B cell (primary cell): ENCODE measurements at regions of chr10 and their contacts with region 1.

Region 1: DNA sequence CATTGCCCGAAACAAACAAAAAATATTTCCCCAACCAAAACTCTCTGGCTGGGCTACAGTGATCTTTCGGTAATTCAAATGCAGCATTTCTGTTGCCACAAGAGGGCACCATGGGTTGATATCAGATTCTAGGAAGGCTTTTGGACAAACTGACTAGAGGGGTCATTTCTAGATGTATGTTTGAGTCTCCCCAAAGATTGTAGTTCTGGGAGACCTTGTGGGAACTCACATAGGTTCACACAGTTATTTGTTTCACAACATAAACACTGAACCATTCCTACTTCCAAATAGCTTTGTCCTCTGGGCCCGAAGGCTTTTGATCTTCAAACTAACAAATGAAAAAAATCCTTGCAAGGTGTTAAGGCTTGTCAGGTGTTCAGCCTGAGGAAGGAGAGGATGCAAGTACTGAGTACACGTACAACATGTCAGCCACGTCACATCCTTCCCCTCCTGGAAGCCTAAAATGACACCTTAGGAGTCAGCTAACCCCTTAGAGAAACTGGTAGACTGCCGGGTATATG is 37.0 kb upstream of the IL15RA start:
- DNase-seq: peak; percentile 79
- ATAC-seq: peak; percentile 79
- H3K4me3 ChIP-seq: no peak overlapping the region
- H3K4me3 Mint-ChIP-seq: no peak overlapping the region
- H3K27ac ChIP-seq: peak overlapping the region; percentile 34 to 57
- H3K27ac Mint-ChIP-seq: peak overlapping the region; percentile 67
- H3K4me1 ChIP-seq: peaks cover 4 to 9% of the 10 kb centered on the region in 2 donors
- H3K4me1 Mint-ChIP-seq: peaks cover 10% of the 10 kb centered on the region
- H3K27me3 ChIP-seq: no peaks in the 10 kb centered on the region
- H3K27me3 Mint-ChIP-seq: no peaks in the 10 kb centered on the region
- CTCF ChIP-seq: peak; percentile 86

Region 2: DNA sequence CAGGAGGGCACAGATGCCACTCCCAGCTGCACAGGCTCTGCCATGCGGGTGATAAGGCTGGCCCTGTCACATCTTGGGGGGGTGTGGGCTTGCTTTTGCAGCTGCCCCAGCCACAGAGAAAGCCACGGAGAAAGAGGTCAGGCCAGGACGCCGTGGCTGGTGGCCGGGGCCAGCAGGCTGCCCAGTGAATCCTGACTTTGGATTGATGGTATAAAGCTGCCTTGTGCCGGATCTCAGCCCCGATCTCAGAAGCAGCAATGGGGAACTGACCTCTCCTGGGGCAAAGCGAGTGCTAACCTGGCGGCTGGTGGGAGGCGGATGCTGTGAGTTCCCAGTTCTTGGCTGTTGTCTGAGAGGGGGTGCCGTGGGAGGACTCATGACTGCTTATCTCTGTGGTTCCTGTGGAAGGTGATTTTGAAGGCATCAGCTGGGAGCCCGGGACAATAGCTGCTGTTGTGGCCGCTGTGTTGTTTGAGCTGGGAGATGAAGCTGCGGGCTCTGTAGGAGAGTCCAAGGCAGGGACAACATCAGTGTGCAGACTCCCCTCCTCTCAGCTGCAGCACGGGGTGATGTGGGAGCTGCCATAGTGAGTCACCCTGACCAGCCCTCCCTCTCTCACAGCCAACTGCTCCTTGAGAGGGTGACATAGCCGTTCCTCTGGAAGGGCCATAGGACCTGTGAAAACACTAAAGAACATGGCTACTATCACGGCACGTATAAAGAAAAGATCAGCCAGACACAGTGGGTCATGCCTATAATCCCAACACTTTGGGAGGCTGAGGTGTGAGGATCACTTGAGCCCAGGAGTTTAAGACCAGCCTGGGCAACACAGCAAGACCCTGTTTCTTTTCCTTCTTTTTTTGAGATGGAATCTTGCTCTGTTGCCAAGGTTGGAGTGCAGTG is 54.0 kb before region 1 on chr10:
- CTCF ChIA-PET with region 1: no interaction called
- POLR2A ChIA-PET with region 1: no interaction called
- intact Hi-C with region 1: no loop called
- DNase-seq: no peak
- ATAC-seq: no peak
- H3K4me3 ChIP-seq: no peak overlapping the region
- H3K4me3 Mint-ChIP-seq: no peak overlapping the region
- H3K27ac ChIP-seq: no peak overlapping the region
- H3K27ac Mint-ChIP-seq: no peak overlapping the region
- H3K4me1 ChIP-seq: no peaks in the 10 kb centered on the region
- H3K4me1 Mint-ChIP-seq: no peaks in the 10 kb centered on the region
- H3K27me3 ChIP-seq: no peaks in the 10 kb centered on the region
- H3K27me3 Mint-ChIP-seq: no peaks in the 10 kb centered on the region
- CTCF ChIP-seq: no peak

Region 3: GRCh38 chr10:5977471-5978229 is 36.7 kb before region 1 on chr10 and contains the start of gene IL15RA:
- CTCF ChIA-PET with region 1: interaction called, 4 read pairs
- POLR2A ChIA-PET with region 1: no interaction called
- intact Hi-C with region 1: loop called (anchors 2 kb)
- DNase-seq: peak; percentile 88
- ATAC-seq: peak; percentile 77
- H3K4me3 ChIP-seq: peak within 1 kb of the TSS; percentile 74 to 96 (median 93)
- H3K4me3 Mint-ChIP-seq: peak within 1 kb of the TSS; percentile 90
- H3K27ac ChIP-seq: peak within 1 kb of the TSS; percentile 65 to 75
- H3K27ac Mint-ChIP-seq: peak within 1 kb of the TSS; percentile 95
- H3K4me1 ChIP-seq: peaks cover 8 to 27% of the 10 kb centered on the region in 2 donors
- H3K4me1 Mint-ChIP-seq: peaks cover 29% of the 10 kb centered on the region
- H3K27me3 ChIP-seq: peaks cover 0 to 3% (median 0%) of the 10 kb centered on the region in 4 experiments
- H3K27me3 Mint-ChIP-seq: no peaks in the 10 kb centered on the region
- CTCF ChIP-seq: peak; percentile 43
- total RNA-seq, gene IL15RA: 6.8 and 9.3 TPM in 2 replicates

Region 4: GRCh38 chr10:6027929-6028328 is 13.6 kb after region 1 on chr10:
- CTCF ChIA-PET with region 1: interaction called, 11 read pairs
- POLR2A ChIA-PET with region 1: interaction called, 5 read pairs
- intact Hi-C with region 1: no loop called
- DNase-seq: no peak
- ATAC-seq: no peak
- H3K4me3 ChIP-seq: no peak overlapping the region
- H3K4me3 Mint-ChIP-seq: no peak overlapping the region
- H3K27ac ChIP-seq: no peak overlapping the region
- H3K27ac Mint-ChIP-seq: no peak overlapping the region
- H3K4me1 ChIP-seq: peaks cover 0 to 5% of the 10 kb centered on the region in 2 donors
- H3K4me1 Mint-ChIP-seq: peaks cover 5% of the 10 kb centered on the region
- H3K27me3 ChIP-seq: no peaks in the 10 kb centered on the region
- H3K27me3 Mint-ChIP-seq: no peaks in the 10 kb centered on the region
- CTCF ChIP-seq: no peak

Region 5: DNA sequence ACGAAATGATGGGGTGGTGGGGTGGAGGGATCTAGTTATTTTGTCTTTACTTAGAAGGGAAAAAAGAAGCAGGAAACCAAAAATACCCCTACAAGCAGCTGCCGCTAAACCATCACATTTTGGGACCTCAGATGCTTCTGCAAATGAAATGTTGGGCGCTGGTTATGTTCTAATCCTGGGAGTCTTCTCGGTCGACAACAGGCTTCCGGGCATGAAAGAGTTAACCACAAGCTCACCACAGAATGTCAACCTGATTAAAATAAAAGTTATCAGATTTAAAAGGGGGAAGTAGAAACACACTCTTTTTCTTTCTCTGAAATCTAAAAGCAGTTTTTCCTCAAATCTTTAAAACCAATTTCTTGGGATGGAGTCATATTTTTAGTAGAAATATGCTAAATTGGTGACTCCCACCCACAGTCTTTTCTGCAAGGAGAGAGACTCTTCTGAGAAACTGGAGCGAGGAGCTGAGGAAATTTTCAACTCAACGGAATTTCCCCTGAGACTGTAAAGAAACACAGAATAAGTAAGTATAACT is 31.1 kb after region 1 on chr10:
- CTCF ChIA-PET with region 1: interaction called, 104 read pairs
- POLR2A ChIA-PET with region 1: interaction called, 5 read pairs
- intact Hi-C with region 1: loop called (anchors 1 kb)
- DNase-seq: no peak
- ATAC-seq: no peak
- H3K4me3 ChIP-seq: peak overlapping the region in 3 of 5 experiments; percentile 2 to 30 (median 5)
- H3K4me3 Mint-ChIP-seq: peak overlapping the region; percentile 82
- H3K27ac ChIP-seq: peak overlapping the region; percentile 21 to 69
- H3K27ac Mint-ChIP-seq: peak overlapping the region; percentile 94
- H3K4me1 ChIP-seq: peaks cover 57 to 58% of the 10 kb centered on the region in 2 donors
- H3K4me1 Mint-ChIP-seq: peaks cover 75% of the 10 kb centered on the region
- H3K27me3 ChIP-seq: no peaks in the 10 kb centered on the region
- H3K27me3 Mint-ChIP-seq: no peaks in the 10 kb centered on the region
- CTCF ChIP-seq: no peak

Region 6: DNA sequence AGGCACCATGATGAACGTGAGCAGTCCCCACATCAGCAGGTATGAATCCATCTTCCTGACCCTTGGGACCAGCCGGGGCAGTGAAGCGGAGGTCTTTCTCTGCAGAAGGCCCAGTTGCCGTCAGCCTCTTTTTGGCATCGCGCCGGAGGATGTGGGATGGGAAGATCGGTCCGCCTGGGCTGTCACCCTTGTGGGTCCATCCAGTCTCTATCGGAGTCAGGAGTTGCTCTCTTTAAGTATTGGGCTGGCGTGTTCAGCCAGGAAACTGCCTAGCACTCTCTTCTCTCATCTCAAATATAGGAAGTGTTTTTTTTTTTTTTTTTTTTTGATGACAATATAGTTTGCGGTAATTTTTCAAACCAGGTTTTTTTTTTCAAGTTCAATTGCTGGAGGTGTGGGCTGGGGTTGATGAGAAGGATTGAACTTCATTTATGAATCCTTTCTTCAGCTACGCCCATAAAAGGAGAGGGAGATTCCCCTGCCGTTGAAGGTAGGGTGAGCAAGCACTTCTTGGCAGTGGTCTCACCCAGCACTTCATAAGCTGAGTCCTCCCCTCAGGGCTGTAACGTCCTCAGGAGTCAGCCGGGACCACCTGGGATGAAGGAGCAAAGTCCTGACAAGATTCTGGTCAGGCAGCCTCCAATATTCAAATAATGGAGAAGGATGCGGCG is 47.9 kb after region 1 on chr10 and contains the start of gene IL2RA:
- CTCF ChIA-PET with region 1: interaction called, 34 read pairs
- POLR2A ChIA-PET with region 1: interaction called, 3 read pairs
- intact Hi-C with region 1: loop called (anchors 5 kb)
- DNase-seq: peak; percentile 73
- ATAC-seq: peak; percentile 73
- H3K4me3 ChIP-seq: peak within 1 kb of the TSS in 4 of 5 experiments; percentile 51 to 62 (median 54)
- H3K4me3 Mint-ChIP-seq: peak within 1 kb of the TSS; percentile 97
- H3K27ac ChIP-seq: peak within 1 kb of the TSS; percentile 62 to 77
- H3K27ac Mint-ChIP-seq: peak within 1 kb of the TSS; percentile 97
- H3K4me1 ChIP-seq: peaks cover 30 to 45% of the 10 kb centered on the region in 2 donors
- H3K4me1 Mint-ChIP-seq: peaks cover 69% of the 10 kb centered on the region
- H3K27me3 ChIP-seq: no peaks in the 10 kb centered on the region
- H3K27me3 Mint-ChIP-seq: no peaks in the 10 kb centered on the region
- CTCF ChIP-seq: no peak
- total RNA-seq, gene IL2RA: 52.7 and 56.7 TPM in 2 replicates

Region 7: DNA sequence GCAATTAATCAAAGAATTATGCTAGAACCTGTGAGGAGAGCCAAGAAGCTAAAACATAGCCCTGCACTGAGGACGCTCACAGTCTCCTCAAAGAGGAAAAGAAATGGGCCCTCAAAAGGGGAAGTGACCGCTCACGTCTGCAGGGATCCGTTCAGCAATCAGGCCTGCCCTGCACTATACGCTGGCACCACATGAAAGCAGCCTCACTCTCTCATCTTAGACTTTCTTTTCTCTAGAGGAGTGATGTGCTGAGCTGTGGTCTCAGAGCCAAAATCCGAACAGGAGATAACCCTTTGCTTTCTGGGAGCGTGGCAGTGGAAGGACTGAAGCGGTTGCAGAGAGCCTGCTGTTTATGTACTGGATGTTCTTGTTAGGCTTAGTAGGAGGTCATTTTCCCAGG is 54.1 kb after region 1 on chr10:
- CTCF ChIA-PET with region 1: interaction called, 34 read pairs
- POLR2A ChIA-PET with region 1: interaction called, 3 read pairs
- intact Hi-C with region 1: loop called (anchors 5 kb)
- DNase-seq: peak; percentile 79
- ATAC-seq: peak; percentile 69
- H3K4me3 ChIP-seq: peak overlapping the region in 2 of 5 experiments; percentile 19 to 40
- H3K4me3 Mint-ChIP-seq: peak overlapping the region; percentile 85
- H3K27ac ChIP-seq: peak overlapping the region; percentile 80 to 91
- H3K27ac Mint-ChIP-seq: peak overlapping the region; percentile 99
- H3K4me1 ChIP-seq: peaks cover 59 to 64% of the 10 kb centered on the region in 2 donors
- H3K4me1 Mint-ChIP-seq: peaks cover 83% of the 10 kb centered on the region
- H3K27me3 ChIP-seq: no peaks in the 10 kb centered on the region
- H3K27me3 Mint-ChIP-seq: no peaks in the 10 kb centered on the region
- CTCF ChIP-seq: no peak

Region 8: DNA sequence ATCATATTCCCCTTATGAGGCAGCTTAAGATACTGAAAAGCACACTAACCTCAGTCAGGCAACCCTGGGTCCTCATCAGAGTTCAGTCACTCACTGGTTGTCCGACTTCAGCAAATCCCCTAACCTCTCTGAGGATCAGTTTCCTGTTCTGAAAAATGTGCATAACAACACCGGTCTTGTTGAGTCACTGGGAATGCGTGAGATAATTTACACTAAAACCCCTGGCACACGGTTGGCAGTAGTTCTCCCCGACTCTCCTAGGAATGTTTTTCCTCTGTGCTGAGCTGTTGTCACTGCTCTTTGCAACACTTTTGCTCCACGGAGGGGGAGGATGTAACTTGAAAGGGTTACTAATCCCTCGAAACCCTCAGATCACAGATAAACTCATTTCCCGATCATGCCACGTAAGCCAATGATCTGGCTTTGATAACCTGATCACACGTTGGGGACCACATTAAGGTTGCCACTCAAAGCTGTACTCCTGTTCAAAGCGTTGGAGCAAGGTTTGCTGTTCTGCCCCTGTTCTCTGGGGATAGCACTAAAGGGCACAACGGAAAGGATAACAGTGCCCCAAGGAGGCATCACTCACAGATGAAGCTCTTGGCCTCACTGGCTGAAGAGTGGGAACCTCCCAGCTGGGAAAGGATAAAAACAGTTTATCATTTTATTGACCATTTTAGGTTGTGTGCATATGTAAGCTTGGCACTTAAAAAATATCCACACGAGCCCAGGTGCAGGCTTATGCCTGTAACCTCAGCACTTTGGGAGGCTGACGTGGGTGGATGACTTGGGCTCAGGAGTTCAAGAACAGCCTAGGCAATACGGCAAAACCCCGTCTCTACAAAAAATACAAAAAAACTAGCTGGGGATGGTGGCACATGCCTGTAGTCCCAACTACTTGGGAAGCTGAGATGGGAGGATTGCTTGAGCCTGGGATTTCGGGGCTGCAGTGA is 69.5 kb after region 1 on chr10:
- CTCF ChIA-PET with region 1: interaction called, 94 read pairs
- POLR2A ChIA-PET with region 1: interaction called, 14 read pairs
- intact Hi-C with region 1: loop called (anchors 1 kb)
- DNase-seq: no peak
- ATAC-seq: no peak
- H3K4me3 ChIP-seq: no peak overlapping the region
- H3K4me3 Mint-ChIP-seq: no peak overlapping the region
- H3K27ac ChIP-seq: no peak overlapping the region
- H3K27ac Mint-ChIP-seq: peak overlapping the region; percentile 1
- H3K4me1 ChIP-seq: peaks cover 19% of the 10 kb centered on the region in 2 donors
- H3K4me1 Mint-ChIP-seq: peaks cover 29% of the 10 kb centered on the region
- H3K27me3 ChIP-seq: no peaks in the 10 kb centered on the region
- H3K27me3 Mint-ChIP-seq: no peaks in the 10 kb centered on the region
- CTCF ChIP-seq: no peak